ENCODE measurements at regions of chr3 and their contacts with region 1.

Region 1: DNA sequence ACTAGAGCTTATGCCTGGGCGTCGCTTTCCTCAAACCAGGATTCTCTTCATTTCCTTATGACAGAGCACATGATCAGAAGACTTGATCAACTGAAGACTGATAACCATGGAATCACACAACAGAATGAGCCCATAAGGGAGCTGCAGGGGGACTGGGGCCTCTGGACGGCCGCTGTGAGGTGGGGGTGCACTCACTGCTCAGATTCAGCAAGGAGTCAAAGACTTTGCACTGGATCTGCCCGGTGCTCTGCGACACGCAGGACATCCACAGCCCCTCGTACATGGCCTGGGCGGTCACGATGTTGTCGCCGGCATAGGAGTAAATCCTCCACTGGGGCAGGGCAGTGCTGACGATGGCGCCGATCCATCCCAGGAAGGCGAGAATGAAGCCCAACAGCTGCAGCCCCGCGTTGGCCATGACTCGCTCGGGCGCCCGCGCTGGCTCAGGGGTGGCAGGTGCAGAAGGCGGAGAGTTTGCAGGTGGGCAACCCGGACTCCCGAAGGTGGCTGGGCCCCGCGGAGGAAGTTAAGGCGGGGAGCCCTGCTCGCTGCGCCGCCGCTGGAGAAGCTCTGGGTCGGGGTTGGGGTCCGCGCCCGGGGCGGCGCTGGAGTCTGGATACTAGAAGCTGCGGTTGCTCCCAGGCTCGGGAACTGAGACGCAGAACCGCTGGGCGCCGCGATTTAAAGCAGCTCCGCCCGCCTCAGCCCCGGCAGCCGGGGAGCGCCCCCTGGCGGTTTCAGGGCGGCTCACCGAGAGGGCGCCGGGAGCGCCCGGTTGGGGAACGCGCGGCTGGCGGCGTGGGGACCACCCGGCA is at the start of gene CLDN1:
- DNase-seq: peak; percentile 73
- H3K4me3 Mint-ChIP-seq: peak within 1 kb of the TSS; percentile 63
- H3K27ac Mint-ChIP-seq: no peak within 1 kb of the TSS
- H3K4me1 Mint-ChIP-seq: peaks cover 19% of the 10 kb centered on the region
- H3K27me3 Mint-ChIP-seq: peaks cover 41% of the 10 kb centered on the region
- total RNA-seq, gene CLDN1: 0.07 to 0.22 TPM

Region 2: DNA sequence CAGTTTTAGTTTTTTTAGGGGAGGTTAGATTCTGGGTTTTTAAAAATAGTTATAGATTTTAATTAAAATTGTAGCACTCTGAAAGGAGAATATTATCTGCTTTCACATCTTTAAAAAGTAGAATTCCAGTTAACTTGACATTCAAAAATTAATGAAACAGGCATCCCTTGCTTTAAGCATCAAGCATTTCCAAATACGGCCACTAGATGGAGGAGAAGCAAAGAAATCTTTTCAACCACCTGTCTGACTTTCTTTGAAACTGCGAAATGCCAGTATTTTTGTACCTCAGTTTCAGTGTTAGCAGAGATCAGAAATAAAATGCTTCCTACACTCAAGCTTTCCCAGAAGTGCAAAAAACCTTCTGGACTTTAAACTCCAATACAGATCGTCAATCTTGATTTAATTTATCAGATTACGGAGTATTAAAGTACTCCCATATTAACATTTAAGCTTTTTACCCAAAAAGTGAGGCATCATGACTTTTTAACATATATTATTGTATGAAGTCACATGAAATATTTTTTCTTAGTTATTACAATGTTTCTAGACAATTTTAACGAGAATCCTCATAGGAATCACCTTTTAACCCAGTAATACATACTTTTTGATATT is 354.6 kb before region 1 on chr3:
- CTCF ChIA-PET with region 1: interaction called, 7 read pairs
- POLR2A ChIA-PET with region 1: no interaction called
- intact Hi-C with region 1: loop called (anchors 1 kb)
- DNase-seq: no peak
- H3K4me3 Mint-ChIP-seq: no peak overlapping the region
- H3K27ac Mint-ChIP-seq: no peak overlapping the region
- H3K4me1 Mint-ChIP-seq: no peaks in the 10 kb centered on the region
- H3K27me3 Mint-ChIP-seq: no peaks in the 10 kb centered on the region

Region 3: GRCh38 chr3:190205739-190206138 is 116.3 kb before region 1 on chr3:
- CTCF ChIA-PET with region 1: interaction called, 4 read pairs
- POLR2A ChIA-PET with region 1: no interaction called
- intact Hi-C with region 1: loop called (anchors 1 kb)
- DNase-seq: no peak
- H3K4me3 Mint-ChIP-seq: no peak overlapping the region
- H3K27ac Mint-ChIP-seq: no peak overlapping the region
- H3K4me1 Mint-ChIP-seq: peaks cover 13% of the 10 kb centered on the region
- H3K27me3 Mint-ChIP-seq: peaks cover 23% of the 10 kb centered on the region

Region 4: DNA sequence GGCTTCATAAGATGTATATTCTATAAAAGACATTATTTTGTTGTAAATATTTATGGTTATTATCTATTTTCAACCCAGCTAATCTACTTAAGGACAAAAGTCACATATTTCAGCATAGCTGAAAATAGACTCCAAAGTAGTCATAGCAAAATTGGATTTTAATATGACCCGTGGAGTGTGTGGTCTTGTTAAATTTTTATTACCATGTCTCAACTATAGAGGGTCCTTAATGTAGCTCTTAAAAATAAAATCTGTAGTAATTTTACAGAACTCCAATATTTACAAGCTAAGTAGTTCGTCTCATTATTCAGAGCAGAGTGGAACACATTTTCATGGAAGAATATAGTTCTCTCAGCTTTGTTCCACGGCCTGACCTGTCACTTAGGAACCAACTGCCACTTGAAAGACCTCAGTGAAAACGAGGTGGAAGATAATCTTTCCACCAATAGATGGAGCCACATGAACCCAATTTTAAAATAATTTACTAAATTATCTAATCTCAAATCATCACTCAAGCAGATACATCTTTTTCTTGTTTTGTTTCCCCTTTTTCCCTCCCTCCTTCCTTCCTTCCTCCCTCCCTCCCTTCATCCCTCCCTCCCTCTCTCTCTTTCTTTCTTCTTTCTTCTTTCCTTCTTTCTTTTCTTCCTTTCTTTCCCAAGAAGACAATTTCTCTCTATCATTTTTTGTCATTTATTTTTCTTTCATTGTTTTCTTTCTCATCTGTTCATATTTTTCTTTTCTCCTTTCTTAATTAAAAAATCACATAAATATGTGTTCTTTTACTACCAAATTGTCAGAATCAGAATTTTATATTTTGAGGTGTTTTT is 96.9 kb before region 1 on chr3:
- CTCF ChIA-PET with region 1: interaction called, 13 read pairs
- POLR2A ChIA-PET with region 1: no interaction called
- intact Hi-C with region 1: loop called (anchors 5 kb)
- DNase-seq: no peak
- H3K4me3 Mint-ChIP-seq: no peak overlapping the region
- H3K27ac Mint-ChIP-seq: no peak overlapping the region
- H3K4me1 Mint-ChIP-seq: peaks cover 2% of the 10 kb centered on the region
- H3K27me3 Mint-ChIP-seq: peaks cover 10% of the 10 kb centered on the region

Region 5: DNA sequence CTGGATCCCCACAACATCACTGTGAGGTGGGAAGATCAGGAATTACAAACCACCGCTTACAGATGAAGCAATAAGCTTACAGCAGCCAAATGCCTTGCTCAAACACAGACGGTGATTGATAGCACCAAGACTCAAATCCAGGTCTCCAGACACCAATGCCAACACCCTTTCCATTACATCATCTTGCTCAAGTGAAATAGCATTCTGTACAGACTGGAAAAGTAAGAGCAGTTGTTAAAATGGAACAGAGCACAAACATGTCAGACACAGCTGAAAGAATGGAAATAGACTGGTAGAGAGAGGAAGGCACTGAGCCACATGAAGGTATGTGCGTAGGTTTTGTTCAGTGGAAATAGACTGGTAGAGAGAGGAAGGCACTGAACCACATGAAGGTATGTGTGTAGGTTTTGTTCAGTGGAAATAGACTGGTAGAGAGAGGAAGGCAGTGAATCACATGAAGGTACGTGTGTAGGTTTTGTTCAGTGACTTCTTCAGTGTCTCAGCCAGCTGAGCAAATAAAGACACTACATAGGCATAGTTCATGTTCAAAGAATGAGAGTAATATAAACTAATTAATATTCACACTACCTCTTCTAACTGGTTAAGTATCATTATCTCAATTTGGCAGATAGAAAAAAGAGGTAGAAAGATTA is 15.4 kb before region 1 on chr3:
- CTCF ChIA-PET with region 1: interaction called, 12 read pairs
- POLR2A ChIA-PET with region 1: no interaction called
- intact Hi-C with region 1: loop called (anchors 1 kb)
- DNase-seq: peak; percentile 11
- H3K4me3 Mint-ChIP-seq: no peak overlapping the region
- H3K27ac Mint-ChIP-seq: peak overlapping the region; percentile 0
- H3K4me1 Mint-ChIP-seq: peaks cover 18% of the 10 kb centered on the region
- H3K27me3 Mint-ChIP-seq: peaks cover 4% of the 10 kb centered on the region

Region 6: GRCh38 chr3:190339130-190339529 is 17.1 kb after region 1 on chr3:
- CTCF ChIA-PET with region 1: interaction called, 12 read pairs
- POLR2A ChIA-PET with region 1: no interaction called
- intact Hi-C with region 1: no loop called
- DNase-seq: no peak
- H3K4me3 Mint-ChIP-seq: no peak overlapping the region
- H3K27ac Mint-ChIP-seq: no peak overlapping the region
- H3K4me1 Mint-ChIP-seq: no peaks in the 10 kb centered on the region
- H3K27me3 Mint-ChIP-seq: peaks cover 7% of the 10 kb centered on the region

Region 7: DNA sequence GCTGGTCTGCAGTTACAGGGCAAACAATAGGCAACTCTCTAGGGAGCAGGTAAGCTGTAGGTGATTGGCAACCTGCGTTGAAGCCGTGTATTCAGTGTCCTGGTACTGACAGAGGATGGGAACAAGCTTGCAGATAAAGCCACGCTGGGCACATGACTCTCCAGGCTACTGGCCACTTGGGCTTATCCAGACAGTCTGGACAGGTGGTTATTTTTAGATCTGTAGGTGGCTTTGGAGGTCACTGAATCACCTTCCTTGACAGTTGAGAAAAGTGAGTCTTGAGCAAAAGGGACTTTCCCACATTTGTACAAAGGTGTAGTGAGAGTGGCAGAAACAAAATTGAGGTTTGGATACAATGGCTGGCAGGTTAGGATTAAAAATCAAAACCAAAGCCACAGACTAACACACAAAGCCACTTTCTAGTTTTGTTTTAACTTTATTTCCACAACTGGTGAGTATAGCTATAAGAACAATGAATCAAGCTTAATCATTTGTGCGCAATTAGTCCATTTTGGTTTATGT is 169.6 kb after region 1 on chr3:
- CTCF ChIA-PET with region 1: no interaction called
- POLR2A ChIA-PET with region 1: no interaction called
- intact Hi-C with region 1: loop called (anchors 1 kb)
- DNase-seq: peak; percentile 37
- H3K4me3 Mint-ChIP-seq: no peak overlapping the region
- H3K27ac Mint-ChIP-seq: no peak overlapping the region
- H3K4me1 Mint-ChIP-seq: peaks cover 17% of the 10 kb centered on the region
- H3K27me3 Mint-ChIP-seq: peaks cover 57% of the 10 kb centered on the region

Region 8: DNA sequence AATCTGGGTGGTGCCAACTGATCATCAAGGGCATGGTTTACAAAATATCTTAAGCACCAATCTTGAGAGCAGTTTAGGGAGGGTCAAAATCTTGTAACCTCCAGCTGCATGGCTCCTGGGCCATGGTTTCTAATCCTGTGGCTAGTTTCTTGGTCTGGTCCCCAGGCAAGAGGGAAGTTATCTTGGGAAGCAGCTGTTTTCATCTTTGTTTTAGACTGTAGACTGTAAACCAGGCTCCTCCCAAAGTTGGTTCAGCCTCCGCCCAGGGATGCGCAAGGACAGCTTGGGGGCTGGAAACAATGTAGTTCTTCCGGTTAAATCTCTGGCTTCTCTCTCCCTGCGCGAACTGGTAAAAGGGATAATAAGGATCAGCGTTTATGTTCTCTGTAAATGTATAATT is 358.8 kb after region 1 on chr3:
- CTCF ChIA-PET with region 1: no interaction called
- POLR2A ChIA-PET with region 1: no interaction called
- intact Hi-C with region 1: no loop called
- DNase-seq: no peak
- H3K4me3 Mint-ChIP-seq: no peak overlapping the region
- H3K27ac Mint-ChIP-seq: no peak overlapping the region
- H3K4me1 Mint-ChIP-seq: no peaks in the 10 kb centered on the region
- H3K27me3 Mint-ChIP-seq: peaks cover 3% of the 10 kb centered on the region

Region 9: GRCh38 chr3:190886945-190887344 is 564.9 kb after region 1 on chr3:
- CTCF ChIA-PET with region 1: no interaction called
- POLR2A ChIA-PET with region 1: no interaction called
- intact Hi-C with region 1: no loop called
- DNase-seq: no peak
- H3K4me3 Mint-ChIP-seq: no peak overlapping the region
- H3K27ac Mint-ChIP-seq: no peak overlapping the region
- H3K4me1 Mint-ChIP-seq: no peaks in the 10 kb centered on the region
- H3K27me3 Mint-ChIP-seq: peaks cover 5% of the 10 kb centered on the region